Naive thymus-derived CD4-positive, alpha-beta T cell (primary cell): ENCODE measurements at regions of chr1 and their contacts with region 1.

Region 1: DNA sequence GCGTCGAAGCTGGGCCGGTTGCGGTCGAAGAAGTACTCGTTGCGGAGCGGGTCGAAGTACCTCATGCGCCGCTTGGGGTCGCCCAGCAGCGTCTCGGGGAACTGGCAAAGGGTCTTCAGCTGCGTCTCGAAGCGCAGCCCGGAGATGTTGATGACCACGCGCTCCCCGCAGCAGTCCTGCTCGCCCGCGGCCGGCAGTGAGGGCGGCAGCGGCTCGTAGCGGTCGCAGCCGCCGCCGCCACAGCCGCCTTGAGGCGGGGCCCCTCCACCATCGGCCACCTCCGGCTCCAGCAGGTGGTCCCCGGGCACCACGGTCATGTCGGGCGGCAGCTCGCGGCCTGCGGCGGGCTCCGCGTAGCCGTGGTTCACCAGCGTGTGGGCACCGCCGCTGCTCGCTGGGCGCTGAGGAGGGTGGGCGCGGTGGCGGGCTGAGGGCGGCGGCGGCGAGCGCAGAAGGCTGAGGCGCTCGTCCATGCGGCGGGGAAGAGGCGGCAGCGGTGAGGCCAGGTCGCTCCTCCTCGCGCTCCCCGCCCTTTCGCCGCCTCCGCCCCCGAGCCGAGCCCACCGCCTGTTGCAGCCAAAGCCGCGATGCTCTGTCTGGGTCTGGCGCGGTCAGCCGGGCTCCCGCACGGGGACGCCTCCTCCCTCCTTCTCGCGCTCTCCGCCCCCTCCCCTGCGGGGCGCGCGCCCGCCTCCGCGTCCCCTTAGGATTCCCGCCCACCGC is at the start of gene KCNA3:
- DNase-seq: peak; percentile 52 to 74 (median 63)
- ATAC-seq: peak; percentile 54
- H3K4me3 ChIP-seq: peak within 1 kb of the TSS; percentile 97
- H3K4me3 Mint-ChIP-seq: peak within 1 kb of the TSS; percentile 55 to 100 (median 99)
- H3K27ac ChIP-seq: peak within 1 kb of the TSS; percentile 88
- H3K27ac Mint-ChIP-seq: peak within 1 kb of the TSS; percentile 93 to 100 (median 100)
- H3K4me1 ChIP-seq: peaks cover 5% of the 10 kb centered on the region in 2 donors
- H3K4me1 Mint-ChIP-seq: peaks cover 27 to 60% (median 55%) of the 10 kb centered on the region in 7 donors
- H3K27me3 ChIP-seq: no peaks in the 10 kb centered on the region
- H3K27me3 Mint-ChIP-seq: peaks cover 0 to 2% (median 0%) of the 10 kb centered on the region in 5 donors
- total RNA-seq, gene KCNA3: 74.1 to 115 (median 108) TPM

Region 2: DNA sequence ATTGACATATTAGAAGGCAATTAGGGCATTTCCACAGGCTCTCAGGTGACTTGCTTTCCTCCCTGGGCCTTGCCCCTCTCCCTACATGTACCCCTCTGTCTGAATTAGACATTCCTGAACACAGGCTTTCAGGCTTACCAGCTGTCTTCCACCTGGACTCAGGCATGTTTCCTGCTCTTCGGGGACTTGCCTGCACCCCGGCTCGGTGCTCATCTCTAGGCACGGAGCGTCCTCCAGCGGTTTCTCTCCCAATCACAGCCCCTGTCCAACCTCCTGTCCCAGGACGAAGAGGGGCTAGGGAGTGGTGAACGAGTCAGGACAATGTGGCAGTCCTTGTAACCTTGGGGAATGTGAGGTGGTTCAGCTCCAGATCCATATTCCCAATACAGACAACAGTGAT is 219.3 kb before region 1 on chr1:
- CTCF ChIA-PET with region 1: no interaction called
- POLR2A ChIA-PET with region 1: no interaction called
- intact Hi-C with region 1: no loop called
- DNase-seq: no peak
- ATAC-seq: no peak
- H3K4me3 ChIP-seq: no peak overlapping the region
- H3K4me3 Mint-ChIP-seq: no peak overlapping the region
- H3K27ac ChIP-seq: no peak overlapping the region
- H3K27ac Mint-ChIP-seq: no peak overlapping the region
- H3K4me1 ChIP-seq: no peaks in the 10 kb centered on the region
- H3K4me1 Mint-ChIP-seq: no peaks in the 10 kb centered on the region
- H3K27me3 ChIP-seq: no peaks in the 10 kb centered on the region
- H3K27me3 Mint-ChIP-seq: peaks cover 0 to 17% (median 12%) of the 10 kb centered on the region in 5 donors

Region 3: DNA sequence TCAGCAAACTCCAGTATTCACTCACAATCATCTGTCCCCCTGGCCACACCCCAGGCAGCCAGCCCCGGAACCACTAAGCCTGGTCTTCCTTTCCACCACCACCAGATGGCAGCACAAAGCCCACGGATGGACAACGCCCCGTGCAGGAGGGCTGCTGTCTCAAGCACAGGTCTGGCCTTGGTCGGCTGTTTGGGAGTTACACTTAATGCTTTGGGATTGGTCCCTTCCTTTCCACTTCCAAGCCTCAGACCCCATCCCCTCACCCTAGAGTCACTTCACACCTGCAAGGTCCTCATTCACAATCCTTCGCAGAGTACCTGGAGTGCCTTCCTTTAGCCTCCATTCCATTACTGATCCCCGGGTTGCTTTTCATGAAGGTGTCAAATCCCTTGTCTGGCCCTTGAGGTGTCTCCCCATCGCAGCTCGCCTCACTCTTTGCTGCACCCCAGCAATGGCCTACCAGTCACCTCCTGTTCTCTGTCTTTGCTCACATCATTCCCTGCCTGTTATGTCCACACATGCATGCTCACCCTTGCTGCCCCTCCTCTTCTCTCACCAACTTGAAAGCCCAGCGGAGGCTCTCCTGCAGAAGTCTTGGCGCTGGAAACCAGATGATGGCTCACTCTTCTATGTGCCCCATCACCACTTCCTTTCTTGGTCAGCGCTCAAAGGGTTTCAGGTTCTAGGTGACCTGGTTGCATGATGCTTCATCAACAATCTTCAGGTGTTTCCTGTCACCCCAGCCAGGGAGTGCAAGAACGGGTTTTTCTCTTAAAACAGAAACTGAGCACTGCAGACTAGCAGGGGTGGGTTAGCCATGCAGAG is 43.4 kb before region 1 on chr1:
- CTCF ChIA-PET with region 1: interaction called, 18 read pairs
- POLR2A ChIA-PET with region 1: interaction called, 121 read pairs
- intact Hi-C with region 1: loop called (anchors 1 kb)
- DNase-seq: peak; percentile 74 to 87 (median 84)
- ATAC-seq: peak; percentile 87
- H3K4me3 ChIP-seq: peak overlapping the region; percentile 50
- H3K4me3 Mint-ChIP-seq: no peak overlapping the region
- H3K27ac ChIP-seq: peak overlapping the region; percentile 57
- H3K27ac Mint-ChIP-seq: no peak overlapping the region
- H3K4me1 ChIP-seq: peaks cover 58 to 59% of the 10 kb centered on the region in 2 donors
- H3K4me1 Mint-ChIP-seq: peaks cover 38 to 62% (median 52%) of the 10 kb centered on the region in 7 donors
- H3K27me3 ChIP-seq: no peaks in the 10 kb centered on the region
- H3K27me3 Mint-ChIP-seq: no peaks in the 10 kb centered on the region

Region 4: DNA sequence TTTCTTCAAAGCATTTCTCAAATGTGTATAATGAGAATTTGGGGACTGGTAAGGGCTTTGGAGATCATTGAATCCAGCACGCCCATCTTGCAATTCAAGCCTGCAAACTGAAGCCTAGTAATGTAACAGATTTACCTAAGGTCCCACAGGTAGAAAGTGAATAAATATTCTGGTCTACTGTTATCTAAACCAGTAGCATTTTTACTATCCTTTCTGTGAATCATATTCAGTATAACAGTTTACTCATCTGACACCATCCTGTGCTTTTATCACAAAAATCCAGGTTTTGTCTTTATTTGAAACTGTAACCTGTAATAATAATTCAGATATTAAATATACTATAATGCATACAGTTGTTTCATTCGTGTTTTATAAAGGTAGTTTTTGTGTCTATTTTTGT is 17.1 kb before region 1 on chr1:
- CTCF ChIA-PET with region 1: interaction called, 3 read pairs
- POLR2A ChIA-PET with region 1: interaction called, 23 read pairs
- intact Hi-C with region 1: loop called in 1 of 2 experiments (anchors 2 kb)
- DNase-seq: no peak
- ATAC-seq: no peak
- H3K4me3 ChIP-seq: no peak overlapping the region
- H3K4me3 Mint-ChIP-seq: no peak overlapping the region
- H3K27ac ChIP-seq: no peak overlapping the region
- H3K27ac Mint-ChIP-seq: peak overlapping the region in 8 of 9 donors; percentile 14 to 90 (median 63)
- H3K4me1 ChIP-seq: peaks cover 4 to 13% of the 10 kb centered on the region in 2 donors
- H3K4me1 Mint-ChIP-seq: peaks cover 16 to 63% (median 47%) of the 10 kb centered on the region in 7 donors
- H3K27me3 ChIP-seq: no peaks in the 10 kb centered on the region
- H3K27me3 Mint-ChIP-seq: no peaks in the 10 kb centered on the region

Region 5: DNA sequence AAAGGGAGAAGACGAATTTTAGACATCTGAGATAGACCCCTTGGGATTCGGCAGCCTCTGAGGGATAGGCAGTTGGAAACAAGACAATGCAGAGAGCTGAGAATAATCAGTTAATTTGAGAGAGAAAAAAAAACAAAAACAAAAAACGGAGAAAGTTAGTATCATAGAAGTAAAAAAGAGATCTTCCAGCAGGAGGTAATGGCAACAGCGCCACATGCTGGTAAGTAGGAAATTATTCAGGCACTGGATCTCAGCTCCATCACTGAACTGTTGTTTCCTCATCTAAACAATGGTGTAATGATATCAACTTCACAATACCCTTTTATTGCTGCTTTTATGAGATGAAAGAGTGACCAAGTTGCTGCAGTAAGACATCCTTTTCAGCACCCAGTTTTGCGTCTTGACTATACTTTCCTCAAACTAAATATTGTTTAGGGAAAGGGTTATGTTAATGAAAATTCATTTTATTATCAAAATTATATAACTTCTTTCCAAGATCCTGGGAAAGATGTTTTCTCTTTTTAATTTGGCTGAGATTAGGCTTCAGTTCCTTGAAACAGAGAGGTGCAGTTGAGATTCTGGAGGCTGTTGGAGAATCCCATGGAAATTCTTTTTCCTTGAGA is 91.6 kb after region 1 on chr1:
- CTCF ChIA-PET with region 1: interaction called, 25 read pairs
- POLR2A ChIA-PET with region 1: interaction called, 22 read pairs
- intact Hi-C with region 1: loop called (anchors 1 kb)
- DNase-seq: peak in 7 of 9 donors; percentile 27 to 74 (median 61)
- ATAC-seq: peak; percentile 85
- H3K4me3 ChIP-seq: no peak overlapping the region
- H3K4me3 Mint-ChIP-seq: peak overlapping the region in 1 of 10 donors; percentile 21
- H3K27ac ChIP-seq: no peak overlapping the region
- H3K27ac Mint-ChIP-seq: no peak overlapping the region
- H3K4me1 ChIP-seq: no peaks in the 10 kb centered on the region
- H3K4me1 Mint-ChIP-seq: peaks cover 0 to 12% (median 5%) of the 10 kb centered on the region in 7 donors
- H3K27me3 ChIP-seq: no peaks in the 10 kb centered on the region
- H3K27me3 Mint-ChIP-seq: peaks cover 0 to 52% (median 8%) of the 10 kb centered on the region in 5 donors

Region 6: GRCh38 chr1:110872745-110873720 is 198.5 kb after region 1 on chr1 and contains the start of gene CD53:
- CTCF ChIA-PET with region 1: no interaction called
- POLR2A ChIA-PET with region 1: interaction called, 7 read pairs
- intact Hi-C with region 1: loop called (anchors 1 to 5 kb)
- DNase-seq: peak in 8 of 9 donors; percentile 19 to 82 (median 76)
- ATAC-seq: peak; percentile 86
- H3K4me3 ChIP-seq: peak within 1 kb of the TSS; percentile 84
- H3K4me3 Mint-ChIP-seq: peak within 1 kb of the TSS; percentile 94 to 100 (median 96)
- H3K27ac ChIP-seq: peak within 1 kb of the TSS; percentile 91
- H3K27ac Mint-ChIP-seq: peak within 1 kb of the TSS; percentile 95 to 99 (median 98)
- H3K4me1 ChIP-seq: peaks cover 24 to 48% of the 10 kb centered on the region in 2 donors
- H3K4me1 Mint-ChIP-seq: peaks cover 34 to 72% (median 52%) of the 10 kb centered on the region in 7 donors
- H3K27me3 ChIP-seq: no peaks in the 10 kb centered on the region
- H3K27me3 Mint-ChIP-seq: no peaks in the 10 kb centered on the region
- total RNA-seq, gene CD53: 237 to 513 (median 287) TPM

Region 7: DNA sequence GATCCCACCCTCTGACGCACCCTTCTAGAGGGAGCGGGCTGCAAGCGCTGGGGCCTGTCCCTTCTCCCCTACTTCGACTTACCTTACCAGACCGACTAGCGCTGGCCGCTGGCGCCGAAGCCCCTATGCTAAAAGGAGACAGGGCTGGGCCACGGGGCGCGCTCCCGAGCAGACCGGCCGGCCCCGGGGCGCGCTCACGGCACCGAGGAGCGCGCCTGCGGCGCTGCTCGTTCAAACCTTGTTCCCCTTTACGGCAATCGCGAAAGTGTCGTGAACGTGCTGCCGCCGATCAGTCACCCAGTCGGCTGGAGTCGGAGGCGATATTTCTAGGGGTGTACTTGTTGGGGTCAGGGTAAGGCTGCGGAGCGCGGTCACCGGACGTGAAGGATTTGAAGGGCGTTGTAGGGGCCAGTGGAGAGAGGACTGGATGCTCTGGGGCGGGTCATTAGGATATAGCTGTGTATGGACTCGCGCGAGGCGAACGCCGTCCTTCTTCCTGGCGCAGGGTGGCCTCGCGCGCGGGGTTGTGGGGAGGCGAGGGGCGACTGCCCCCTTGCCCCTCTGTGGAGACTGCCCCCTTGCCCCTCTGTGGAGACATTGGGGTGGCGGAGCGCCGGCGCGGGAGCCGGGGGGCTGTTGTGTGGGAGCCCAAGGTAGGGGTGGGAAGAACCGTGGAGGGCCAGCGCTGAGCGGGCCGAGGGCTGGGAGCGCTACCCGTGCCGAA is 465.6 kb after region 1 on chr1 and contains the starts of genes CEPT1 and DRAM2:
- CTCF ChIA-PET with region 1: no interaction called
- POLR2A ChIA-PET with region 1: no interaction called
- intact Hi-C with region 1: loop called in 1 of 2 experiments (anchors 1 kb)
- DNase-seq: peak; percentile 77 to 93 (median 89)
- ATAC-seq: peak; percentile 95
- H3K4me3 ChIP-seq: peak within 1 kb of the TSS; percentile 91
- H3K4me3 Mint-ChIP-seq: peak within 1 kb of the TSS; percentile 87 to 100 (median 98)
- H3K27ac ChIP-seq: peak within 1 kb of the TSS; percentile 93
- H3K27ac Mint-ChIP-seq: peak within 1 kb of the TSS; percentile 91 to 100 (median 97)
- H3K4me1 ChIP-seq: peaks cover 18 to 22% of the 10 kb centered on the region in 2 donors
- H3K4me1 Mint-ChIP-seq: peaks cover 40 to 75% (median 57%) of the 10 kb centered on the region in 7 donors
- H3K27me3 ChIP-seq: no peaks in the 10 kb centered on the region
- H3K27me3 Mint-ChIP-seq: no peaks in the 10 kb centered on the region
- total RNA-seq, gene CEPT1: 39.1 to 57.5 (median 40.2) TPM
- total RNA-seq, gene DRAM2: 26.9 to 51.6 (median 43.5) TPM